ENCODE measurements at regions of chr17 and their contacts with region 1.

Region 1: GRCh38 chr17:77734341-77735080 is 224.0 kb upstream of the TNRC6C start:
- DNase-seq: peak; percentile 94

Region 2: DNA sequence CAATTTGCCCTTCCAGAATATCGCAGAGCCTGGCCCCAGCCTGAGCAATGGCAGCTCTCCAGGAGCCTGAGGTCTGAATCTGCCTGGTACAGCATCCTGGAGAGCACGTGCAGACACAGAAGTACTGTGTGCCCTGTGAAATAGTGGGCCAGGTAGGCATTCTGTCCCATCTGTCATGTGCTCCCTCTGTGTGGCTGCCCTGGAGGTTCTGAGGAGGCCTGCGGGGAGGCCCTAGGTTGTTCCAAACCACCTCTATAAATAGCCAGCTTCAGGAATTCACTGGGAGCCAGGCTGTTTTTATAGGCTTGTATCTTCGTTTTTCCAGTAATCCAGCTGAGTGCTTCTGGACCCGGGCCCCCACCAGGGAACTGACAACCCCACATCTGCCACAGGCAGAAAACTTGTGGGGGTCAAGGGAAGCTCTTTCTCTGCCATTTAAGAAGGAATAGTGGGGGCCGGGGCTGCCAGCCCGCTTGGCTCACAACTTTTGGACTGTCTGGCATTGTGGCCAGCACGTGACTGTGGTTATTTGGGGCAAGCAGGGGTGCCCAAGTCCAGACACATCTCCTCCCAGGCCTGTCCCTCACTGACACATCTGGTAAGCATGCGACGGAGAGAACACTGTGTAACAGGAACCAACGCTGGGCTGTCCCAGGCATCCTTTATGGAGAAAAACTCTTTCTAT is 132.3 kb before region 1 on chr17:
- intact Hi-C with region 1: loop called (anchors 2 kb)
- DNase-seq: peak; percentile 89

Region 3: DNA sequence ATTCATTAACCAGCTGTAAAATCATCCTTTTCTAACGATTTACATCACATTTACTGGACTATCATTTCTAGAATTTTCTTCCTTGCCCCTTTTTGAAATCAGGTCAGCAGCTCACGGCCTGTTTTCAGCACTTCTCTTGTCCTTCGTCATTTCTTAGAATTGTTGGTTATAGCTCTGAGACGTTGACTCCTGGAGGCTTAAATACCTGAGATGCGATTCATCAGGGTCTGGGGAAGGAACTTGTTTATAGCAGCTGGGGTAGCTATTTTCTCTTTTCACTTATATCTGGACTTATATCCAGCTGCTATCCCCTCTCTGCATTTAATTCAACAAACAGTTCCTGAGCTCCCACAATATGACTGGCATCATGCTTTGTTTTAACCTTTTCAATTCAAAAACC is 114.7 kb before region 1 on chr17:
- intact Hi-C with region 1: no loop called
- DNase-seq: no peak

Region 4: DNA sequence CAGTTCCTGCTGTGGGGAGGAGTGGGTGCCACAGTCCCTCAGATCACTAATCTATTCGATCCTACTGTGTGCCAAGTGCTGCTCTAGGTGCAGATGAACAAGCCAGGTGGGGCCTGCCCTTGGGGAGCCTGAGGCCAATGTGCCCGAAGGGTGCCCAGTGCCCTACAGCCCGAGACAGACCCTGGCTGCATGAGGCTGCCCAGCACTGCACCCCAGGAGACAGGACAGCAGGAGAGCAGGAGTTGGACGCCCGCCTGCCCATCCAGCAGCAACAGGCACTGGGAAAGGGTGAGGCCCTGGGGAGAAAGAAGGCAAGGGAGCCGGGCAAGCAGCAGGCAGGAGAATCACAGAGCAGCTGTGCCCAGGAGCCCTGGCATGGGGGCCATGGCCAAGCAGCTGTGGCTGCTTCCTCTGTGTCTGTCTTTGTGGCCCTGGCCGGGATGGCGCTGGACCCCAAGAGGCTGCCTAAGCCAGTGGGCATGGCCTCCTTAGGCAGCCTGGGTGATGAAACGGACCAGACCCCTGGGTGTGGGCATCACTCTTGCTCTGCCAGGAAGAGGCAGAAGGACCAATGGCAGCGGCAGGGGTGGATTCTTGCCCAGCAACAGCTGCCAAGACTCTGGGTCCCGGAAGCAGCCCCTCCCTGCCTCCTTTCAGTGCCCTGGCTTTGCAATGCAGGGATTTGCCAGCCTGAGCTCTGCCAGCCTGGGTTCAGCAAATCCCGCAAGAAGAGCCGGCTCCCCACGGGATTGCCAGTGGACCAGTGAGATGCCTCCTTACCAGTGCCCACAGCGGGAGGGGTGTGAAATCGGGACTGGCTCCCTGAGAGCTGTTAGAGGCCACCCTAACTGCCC is 44.4 kb after region 1 on chr17:
- intact Hi-C with region 1: loop called (anchors 1 kb)
- DNase-seq: peak; percentile 88

Region 5: GRCh38 chr17:77802811-77803220 is 68.3 kb after region 1 on chr17:
- intact Hi-C with region 1: no loop called
- DNase-seq: peak; percentile 27

Measured in cardiac septum (tissue), 1 donor.